Mammary epithelial cell (primary cell): ENCODE measurements at regions of chr22 and their contacts with region 1.

Region 1: DNA sequence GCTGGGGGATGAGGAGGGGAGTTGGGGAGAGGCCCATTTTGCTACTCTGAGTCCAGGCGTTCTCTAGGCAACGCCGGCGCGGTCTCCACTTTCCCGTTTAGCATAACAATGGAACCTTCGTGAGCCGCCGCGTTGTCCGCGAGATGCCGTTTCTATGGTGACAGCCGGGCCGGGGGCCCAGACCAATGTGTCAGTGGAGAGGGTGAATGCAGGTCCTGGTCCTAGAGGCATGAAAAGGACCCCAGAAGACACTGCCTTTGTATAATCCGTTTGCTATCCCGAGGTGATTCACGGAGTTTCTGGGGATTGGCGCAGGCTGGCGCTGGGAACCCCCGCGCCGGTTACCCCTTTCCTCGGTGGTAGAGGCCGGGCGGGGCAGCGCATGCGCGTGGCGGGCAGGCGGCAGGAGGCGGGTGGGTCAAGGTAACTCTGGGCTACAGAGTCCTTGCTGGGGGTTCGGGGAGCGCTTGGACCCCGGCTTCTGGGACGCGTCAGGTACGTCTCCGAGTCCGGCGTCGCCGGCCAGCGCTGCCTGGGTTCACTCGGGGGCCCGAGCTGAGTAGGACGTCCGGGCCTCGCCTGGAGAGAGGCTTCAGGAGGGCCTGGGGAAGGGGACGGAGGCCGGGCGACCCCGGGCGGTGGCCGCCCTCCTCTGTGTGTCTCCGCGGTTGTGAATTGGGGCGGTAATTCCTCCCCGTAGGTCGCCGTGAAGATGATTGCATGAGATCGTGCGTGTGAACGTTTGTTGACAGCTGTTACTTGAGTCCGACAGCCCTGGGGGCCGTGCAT is at the starts of genes CBY1 and FAM227A:
- DNase-seq: peak; percentile 87
- H3K4me3 ChIP-seq: peak within 1 kb of the TSS; percentile 61 to 91 (median 81)
- H3K27ac ChIP-seq: peak within 1 kb of the TSS; percentile 96
- H3K4me1 ChIP-seq: no peaks in the 10 kb centered on the region
- H3K27me3 ChIP-seq: no peaks in the 10 kb centered on the region
- CTCF ChIP-seq: no peak
- total RNA-seq, gene CBY1: 19.5 to 34.1 TPM
- total RNA-seq, gene FAM227A: 2.1 to 5.7 TPM

Region 2: GRCh38 chr22:38429499-38430068 is 226.9 kb before region 1 on chr22:
- CTCF ChIA-PET with region 1: no interaction called
- dilution Hi-C with region 1: loop called (anchors 5 kb)
- in situ Hi-C with region 1: no loop called
- intact Hi-C with region 1: no loop called
- DNase-seq: no peak
- H3K4me3 ChIP-seq: no peak overlapping the region
- H3K27ac ChIP-seq: no peak overlapping the region
- H3K4me1 ChIP-seq: no peaks in the 10 kb centered on the region
- H3K27me3 ChIP-seq: no peaks in the 10 kb centered on the region
- CTCF ChIP-seq: no peak

Region 3: GRCh38 chr22:38506118-38506962 is 150.1 kb before region 1 on chr22 and contains the start of gene DDX17:
- CTCF ChIA-PET with region 1: no interaction called
- dilution Hi-C with region 1: no loop called
- in situ Hi-C with region 1: no loop called
- intact Hi-C with region 1: loop called (anchors 5 kb)
- DNase-seq: peak; percentile 92
- H3K4me3 ChIP-seq: peak within 1 kb of the TSS; percentile 83 to 96 (median 90)
- H3K27ac ChIP-seq: peak within 1 kb of the TSS; percentile 98
- H3K4me1 ChIP-seq: peaks cover 12% of the 10 kb centered on the region
- H3K27me3 ChIP-seq: no peaks in the 10 kb centered on the region
- CTCF ChIP-seq: no peak
- total RNA-seq, gene DDX17: 235 to 405 TPM

Region 4: DNA sequence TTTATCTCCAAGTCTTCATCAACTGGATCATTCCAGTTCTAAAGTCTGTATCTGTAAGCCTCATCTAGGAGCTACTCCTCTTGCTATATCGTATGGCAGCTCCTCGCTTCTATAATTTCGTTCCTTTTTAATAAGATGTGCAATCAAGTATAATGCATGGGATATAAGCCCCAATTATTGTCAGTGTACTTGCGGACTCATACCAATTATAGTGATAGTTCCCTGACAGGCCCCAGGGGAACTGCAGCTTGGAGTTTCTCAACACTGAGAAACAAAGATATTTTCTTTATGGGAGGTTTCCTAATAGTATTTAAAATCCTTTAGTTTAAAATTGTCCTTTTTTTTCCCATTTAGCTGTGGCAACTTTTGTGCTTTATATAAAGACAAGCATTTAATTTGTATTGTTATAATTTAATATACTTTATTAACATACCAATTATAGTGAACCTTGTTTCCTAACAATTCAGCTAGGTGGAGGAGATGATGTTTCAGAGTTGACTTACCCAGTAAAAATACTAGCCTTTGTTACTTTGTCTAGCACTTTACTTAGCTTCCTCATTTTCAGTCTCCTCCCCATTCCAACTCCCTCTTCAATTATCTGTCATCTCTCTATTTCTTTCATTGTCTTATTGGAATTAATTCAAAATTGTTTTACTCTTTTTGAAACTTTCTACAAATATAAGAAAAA is 125.1 kb before region 1 on chr22:
- CTCF ChIA-PET with region 1: no interaction called
- dilution Hi-C with region 1: loop called (anchors 5 kb)
- in situ Hi-C with region 1: no loop called
- intact Hi-C with region 1: no loop called
- DNase-seq: no peak
- H3K4me3 ChIP-seq: no peak overlapping the region
- H3K27ac ChIP-seq: no peak overlapping the region
- H3K4me1 ChIP-seq: no peaks in the 10 kb centered on the region
- H3K27me3 ChIP-seq: no peaks in the 10 kb centered on the region
- CTCF ChIP-seq: no peak

Region 5: GRCh38 chr22:38705235-38706100 is 49.0 kb after region 1 on chr22 and contains the start of gene GTPBP1:
- CTCF ChIA-PET with region 1: no interaction called
- dilution Hi-C with region 1: loop called (anchors 5 kb)
- in situ Hi-C with region 1: no loop called
- intact Hi-C with region 1: loop called (anchors 1 kb)
- DNase-seq: peak; percentile 100
- H3K4me3 ChIP-seq: peak within 1 kb of the TSS; percentile 73 to 93 (median 84)
- H3K27ac ChIP-seq: peak within 1 kb of the TSS; percentile 86
- H3K4me1 ChIP-seq: peaks cover 32% of the 10 kb centered on the region
- H3K27me3 ChIP-seq: no peaks in the 10 kb centered on the region
- CTCF ChIP-seq: peak in 1 of 2 donors; percentile 14
- total RNA-seq, gene GTPBP1: 23.0 to 47.4 TPM